ENCODE measurements at regions of chr2 and their contacts with region 1.

Region 1: DNA sequence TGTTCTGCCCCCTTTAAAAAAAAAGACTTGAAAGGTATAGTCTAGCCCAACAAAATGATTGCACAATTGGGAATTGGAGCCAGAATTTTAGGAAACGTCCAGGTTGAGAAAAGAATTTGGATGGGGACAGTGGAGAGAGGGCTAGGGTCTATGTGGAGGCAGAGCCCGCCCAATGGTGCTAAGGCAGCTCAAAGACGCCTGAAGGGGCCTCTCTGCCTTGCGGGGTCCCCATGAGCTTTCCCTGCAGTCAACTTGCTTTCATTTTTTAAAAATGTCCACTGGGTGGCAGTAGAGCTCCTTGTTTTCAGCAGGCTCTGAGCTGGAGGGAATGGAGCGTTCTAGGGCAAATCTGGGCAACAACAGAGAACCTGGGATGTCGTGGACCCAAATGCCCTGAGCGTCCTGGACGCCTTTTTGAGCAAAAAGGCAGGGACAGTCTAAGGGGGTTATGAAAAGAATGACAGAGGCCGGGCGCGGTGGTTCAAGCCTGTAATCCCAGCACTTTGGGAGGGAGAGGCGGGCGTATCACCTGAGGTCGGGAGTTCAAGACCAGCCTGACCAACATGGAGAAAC is 40.2 kb upstream of the ITM2C start:
- DNase-seq: peak; percentile 59
- H3K27ac ChIP-seq: no peak overlapping the region
- CTCF ChIP-seq: peak; percentile 75

Region 2: GRCh38 chr2:231052494-231053451 is 228.3 kb after region 1 on chr2:
- CTCF ChIA-PET with region 1: interaction called, 11 read pairs
- POLR2A ChIA-PET with region 1: no interaction called
- DNase-seq: peak; percentile 77
- H3K27ac ChIP-seq: peak overlapping the region; percentile 61
- CTCF ChIP-seq: peak; percentile 95

Measured in RWPE1 (cell line).